Activated CD4-positive, alpha-beta T cell treated with anti-CD3 and anti-CD28 coated beads for 36 hours (primary cell): ENCODE measurements at regions of chr11 and their contacts with region 1.

Region 1: DNA sequence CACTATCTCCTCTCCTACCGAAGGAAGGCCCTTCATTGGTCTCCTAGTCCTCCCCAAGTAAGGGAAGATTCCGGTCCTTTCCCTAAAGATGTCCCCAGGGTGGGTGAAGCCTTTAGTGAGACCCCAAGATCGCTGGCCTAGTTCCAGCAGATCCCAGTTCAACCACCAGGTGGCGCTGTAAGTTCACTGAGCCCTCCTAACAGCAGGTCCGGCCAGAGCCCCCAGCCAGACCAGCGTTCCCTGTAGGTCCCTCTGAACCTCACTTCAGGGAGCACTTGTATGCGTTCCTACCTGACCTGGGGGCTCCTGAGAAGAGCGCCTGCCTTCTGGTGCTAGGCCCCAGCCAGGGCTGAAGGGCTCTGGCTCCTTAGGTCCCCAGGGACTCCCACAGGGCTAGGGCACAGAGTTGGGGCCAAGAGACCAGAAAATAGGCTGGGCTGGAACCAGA is 38.1 kb downstream of the LMO1 start:
- DNase-seq: peak; percentile 82
- ATAC-seq: peak; percentile 70
- H3K4me3 Mint-ChIP-seq: no peak overlapping the region
- H3K27ac Mint-ChIP-seq: no peak overlapping the region
- H3K4me1 Mint-ChIP-seq: no peaks in the 10 kb centered on the region
- H3K27me3 Mint-ChIP-seq: no peaks in the 10 kb centered on the region

Region 2: DNA sequence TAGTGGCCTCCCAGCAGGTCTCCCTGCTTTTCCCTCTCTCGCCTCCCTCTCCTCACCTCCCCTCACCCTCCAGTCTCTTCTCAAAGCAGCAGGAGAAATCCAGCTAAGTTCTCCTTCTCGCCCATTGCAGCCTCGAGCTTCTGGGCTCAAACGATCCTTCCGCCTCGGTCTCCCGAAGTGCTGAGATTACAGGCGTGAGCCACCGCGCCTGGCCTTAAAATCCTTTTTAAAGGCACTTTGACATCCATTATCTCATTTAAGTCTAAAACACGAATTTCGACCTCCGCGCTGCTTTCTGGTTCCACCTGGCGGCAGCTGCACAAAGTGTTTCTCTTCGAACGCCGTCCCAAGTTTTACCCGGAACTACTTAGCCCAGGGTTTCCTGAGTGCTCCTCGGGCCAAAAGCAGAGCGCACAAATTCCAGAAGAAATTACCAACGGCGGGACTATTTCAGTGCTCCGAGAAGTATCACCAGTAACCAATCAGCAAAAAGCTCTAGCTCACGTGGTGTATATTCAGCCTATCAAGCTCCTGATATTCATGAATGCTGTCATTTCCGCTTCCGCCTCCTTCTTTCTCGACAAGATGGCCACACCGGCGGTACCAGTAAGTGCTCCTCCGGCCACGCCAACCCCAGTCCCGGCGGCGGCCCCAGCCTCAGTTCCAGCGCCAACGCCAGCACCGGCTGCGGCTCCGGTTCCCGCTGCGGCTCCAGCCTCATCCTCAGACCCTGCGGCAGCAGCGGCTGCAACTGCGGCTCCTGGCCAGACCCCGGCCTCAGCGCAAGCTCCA is 238.6 kb before region 1 on chr11 and contains the start of gene EIF3F:
- CTCF ChIA-PET with region 1: no interaction called
- POLR2A ChIA-PET with region 1: no interaction called
- intact Hi-C with region 1: no loop called
- DNase-seq: peak; percentile 93
- ATAC-seq: peak; percentile 99
- H3K4me3 Mint-ChIP-seq: peak within 1 kb of the TSS; percentile 94
- H3K27ac Mint-ChIP-seq: peak within 1 kb of the TSS; percentile 99
- H3K4me1 Mint-ChIP-seq: peaks cover 37% of the 10 kb centered on the region
- H3K27me3 Mint-ChIP-seq: no peaks in the 10 kb centered on the region
- total RNA-seq, gene EIF3F: 270 to 289 TPM

Region 3: DNA sequence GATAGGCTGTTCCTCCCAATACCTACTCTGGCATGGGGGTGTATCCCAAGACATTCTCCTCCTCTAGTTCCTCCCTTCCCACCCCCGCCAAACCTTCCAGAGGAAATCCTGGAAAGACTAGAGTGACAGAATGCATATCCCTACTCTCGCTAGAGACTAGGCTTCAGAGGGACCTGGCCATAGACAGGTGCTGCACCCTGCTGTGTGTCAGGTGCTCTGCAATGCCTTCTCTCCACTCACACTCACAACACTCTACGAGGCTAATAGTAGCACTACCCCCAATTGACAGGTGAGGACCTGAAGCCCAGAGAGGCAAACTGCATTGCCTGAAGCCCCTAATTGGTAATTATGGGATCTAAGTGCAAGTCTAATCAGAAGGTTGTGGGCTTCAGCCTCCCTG is 84.2 kb after region 1 on chr11:
- CTCF ChIA-PET with region 1: interaction called, 3 read pairs
- POLR2A ChIA-PET with region 1: no interaction called
- intact Hi-C with region 1: loop called (anchors 2 to 10 kb)
- DNase-seq: no peak
- ATAC-seq: no peak
- H3K4me3 Mint-ChIP-seq: no peak overlapping the region
- H3K27ac Mint-ChIP-seq: no peak overlapping the region
- H3K4me1 Mint-ChIP-seq: no peaks in the 10 kb centered on the region
- H3K27me3 Mint-ChIP-seq: peaks cover under 1% of the 10 kb centered on the region

Region 4: GRCh38 chr11:8318336-8318935 is 92.8 kb after region 1 on chr11:
- CTCF ChIA-PET with region 1: interaction called, 3 read pairs
- POLR2A ChIA-PET with region 1: no interaction called
- intact Hi-C with region 1: loop called (anchors 1 to 10 kb)
- DNase-seq: peak; percentile 45
- ATAC-seq: no peak
- H3K4me3 Mint-ChIP-seq: no peak overlapping the region
- H3K27ac Mint-ChIP-seq: no peak overlapping the region
- H3K4me1 Mint-ChIP-seq: no peaks in the 10 kb centered on the region
- H3K27me3 Mint-ChIP-seq: peaks cover 10% of the 10 kb centered on the region